Mammary epithelial cell (primary cell): ENCODE measurements at regions of chr3 and their contacts with region 1.

Region 1: GRCh38 chr3:102189956-102190723 is 244.7 kb upstream of the ZPLD1 start:
- DNase-seq: peak; percentile 83
- H3K4me3 ChIP-seq: peak overlapping the region; percentile 5 to 22 (median 10)
- H3K27ac ChIP-seq: peak overlapping the region; percentile 94
- H3K4me1 ChIP-seq: peaks cover 67% of the 10 kb centered on the region
- H3K27me3 ChIP-seq: no peaks in the 10 kb centered on the region
- CTCF ChIP-seq: peak in 1 of 2 donors; percentile 7

Region 2: GRCh38 chr3:101809178-101810021 is 380.7 kb before region 1 on chr3:
- CTCF ChIA-PET with region 1: no interaction called
- dilution Hi-C with region 1: no loop called
- in situ Hi-C with region 1: no loop called
- intact Hi-C with region 1: loop called (anchors 1 kb)
- DNase-seq: no peak
- H3K4me3 ChIP-seq: no peak overlapping the region
- H3K27ac ChIP-seq: no peak overlapping the region
- H3K4me1 ChIP-seq: peaks cover 5% of the 10 kb centered on the region
- H3K27me3 ChIP-seq: no peaks in the 10 kb centered on the region
- CTCF ChIP-seq: peak; percentile 59 to 60

Region 3: DNA sequence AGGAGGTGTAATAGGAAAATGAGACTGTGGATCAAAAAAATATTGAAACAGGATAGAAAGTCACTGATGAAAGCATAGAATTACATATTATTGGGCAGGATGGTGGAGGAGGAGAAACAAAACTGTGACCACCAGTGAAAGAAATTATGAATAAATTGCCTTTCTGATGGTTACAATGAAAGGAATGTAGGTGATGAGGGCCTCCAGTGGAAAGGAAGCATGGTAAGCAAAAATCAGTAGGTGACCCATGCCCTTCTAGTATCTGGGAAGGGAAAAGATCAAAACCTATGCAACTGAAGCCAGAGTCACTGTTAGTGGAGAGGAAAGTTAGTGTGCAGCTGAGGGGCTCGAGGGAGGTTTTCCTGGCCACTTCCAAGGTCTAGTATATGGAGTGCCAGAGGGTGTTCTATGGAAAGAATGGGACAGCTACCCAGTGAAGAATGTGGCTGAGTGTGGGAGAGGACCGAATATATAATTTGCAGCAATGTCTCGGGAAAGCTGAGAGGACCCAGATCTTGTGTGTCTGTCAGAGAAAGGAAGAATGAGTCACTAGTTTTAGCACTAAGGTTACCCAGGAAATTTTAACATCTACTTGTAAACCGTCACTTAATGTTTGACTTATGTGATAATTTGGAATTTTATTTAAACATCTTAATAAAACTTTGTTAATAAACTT is 194.6 kb before region 1 on chr3:
- CTCF ChIA-PET with region 1: no interaction called
- dilution Hi-C with region 1: no loop called
- in situ Hi-C with region 1: no loop called
- intact Hi-C with region 1: loop called (anchors 2 kb)
- DNase-seq: no peak
- H3K4me3 ChIP-seq: no peak overlapping the region
- H3K27ac ChIP-seq: no peak overlapping the region
- H3K4me1 ChIP-seq: peaks cover 30% of the 10 kb centered on the region
- H3K27me3 ChIP-seq: no peaks in the 10 kb centered on the region
- CTCF ChIP-seq: no peak